ENCODE measurements at regions of chr16 and their contacts with region 1.

Region 1: DNA sequence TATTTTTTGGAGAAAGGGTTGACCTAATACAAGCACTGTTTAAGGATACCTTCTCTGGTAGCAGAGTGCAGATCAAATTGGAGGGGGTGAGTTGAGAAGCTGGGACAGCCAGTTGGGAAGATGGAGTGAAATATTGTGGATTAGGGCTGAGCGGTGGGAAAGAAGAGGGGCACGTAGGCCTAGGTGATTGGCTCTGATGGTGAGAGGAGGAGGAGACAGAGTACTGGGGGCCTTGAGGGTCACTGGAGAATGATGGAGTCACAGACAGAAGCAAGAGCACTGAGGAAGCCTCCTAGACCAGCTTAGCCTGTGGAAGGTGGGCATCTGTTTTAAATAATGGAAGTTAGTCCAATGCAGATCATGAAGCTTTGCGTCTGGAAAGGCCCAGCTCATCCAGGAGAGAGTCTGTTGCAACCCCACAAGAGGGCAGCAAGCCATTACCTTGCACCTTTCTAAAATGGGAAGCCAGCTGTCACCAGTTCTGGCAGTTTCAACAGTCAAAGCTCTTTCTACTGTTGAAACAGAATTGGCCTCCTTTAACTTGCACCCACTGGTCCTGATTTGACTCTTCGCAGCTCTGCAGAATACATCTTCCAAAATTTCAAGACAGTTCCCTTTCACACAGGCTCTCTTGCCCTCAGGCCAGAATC is 11.8 kb downstream of the SLC9A5 start:
- DNase-seq: peak; percentile 72
- ATAC-seq: peak; percentile 80
- H3K4me3 ChIP-seq: no peak overlapping the region
- H3K27ac ChIP-seq: no peak overlapping the region
- H3K4me1 ChIP-seq: peaks cover 2% of the 10 kb centered on the region; the same call in 1 of the 2 replicates
- H3K27me3 ChIP-seq: no peaks in the 10 kb centered on the region
- CTCF ChIP-seq: peak; percentile 79
- POLR2A ChIP-seq: no peak
- RAD21 ChIP-seq: peak; percentile 91

Region 2: DNA sequence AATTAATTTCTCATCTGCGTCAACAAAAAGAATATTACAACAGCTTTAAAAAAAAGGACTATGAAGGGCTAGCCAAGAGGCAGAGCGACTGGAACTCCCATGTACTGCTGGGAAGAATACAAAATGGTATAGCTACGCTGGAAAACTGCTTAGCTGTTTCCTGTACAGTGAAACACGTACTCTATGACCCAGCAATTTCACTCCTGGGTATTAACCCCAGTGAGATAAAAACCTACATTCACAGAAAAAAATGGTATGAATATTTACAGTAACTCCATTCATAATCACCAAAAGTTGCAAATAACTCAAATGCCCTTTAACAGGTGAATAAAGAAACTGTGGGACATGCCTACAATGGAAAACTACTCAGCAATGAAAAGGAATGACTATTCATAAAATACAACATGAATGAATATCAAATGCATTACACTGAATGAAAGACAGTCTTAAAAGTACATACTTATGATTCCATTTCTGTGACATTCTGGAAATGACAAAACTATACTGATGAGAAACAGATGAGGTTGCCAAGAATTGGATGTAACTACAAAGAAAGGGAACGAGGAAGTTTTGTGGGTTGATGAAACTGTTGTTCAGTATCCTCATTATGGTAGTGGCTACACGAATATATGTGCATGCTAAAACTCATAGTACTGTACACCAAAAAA is 591.6 kb before region 1 on chr16:
- CTCF ChIA-PET with region 1: no interaction called
- POLR2A ChIA-PET with region 1: no interaction called
- dilution Hi-C with region 1: no loop called
- in situ Hi-C with region 1: no loop called
- intact Hi-C with region 1: no loop called
- DNase-seq: peak; percentile 66
- ATAC-seq: 0 out of 2 replicates have a peak, but pooled peaks have one; percentile 24
- H3K4me3 ChIP-seq: no peak overlapping the region
- H3K27ac ChIP-seq: no peak overlapping the region
- H3K4me1 ChIP-seq: no peaks in the 10 kb centered on the region
- H3K27me3 ChIP-seq: no peaks in the 10 kb centered on the region
- CTCF ChIP-seq: no peak
- POLR2A ChIP-seq: no peak
- RAD21 ChIP-seq: no peak

Region 3: DNA sequence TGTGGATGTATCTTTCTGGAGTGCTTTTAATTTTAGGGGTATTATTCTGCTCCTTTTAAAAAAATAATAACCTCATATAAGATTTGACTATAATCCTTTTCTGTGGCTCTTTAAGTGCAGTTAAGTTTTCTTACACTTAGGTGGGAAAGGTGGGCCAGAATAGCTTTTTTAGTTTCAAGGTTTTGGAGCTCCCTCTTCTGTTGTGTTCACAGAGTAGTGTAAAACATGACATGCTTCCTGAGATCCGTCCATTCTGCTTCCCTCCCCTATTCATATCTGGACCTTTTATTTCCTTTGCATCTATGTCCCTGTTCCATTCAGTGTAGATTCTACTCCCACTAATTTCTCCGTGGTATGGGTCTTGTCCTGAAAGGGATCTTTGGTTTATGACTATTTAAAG is 78.9 kb after region 1 on chr16:
- CTCF ChIA-PET with region 1: interaction called, 15 read pairs
- POLR2A ChIA-PET with region 1: no interaction called
- dilution Hi-C with region 1: no loop called
- in situ Hi-C with region 1: no loop called
- intact Hi-C with region 1: loop called (anchors 2 kb)
- DNase-seq: peak; percentile 60
- ATAC-seq: peak; percentile 71
- H3K4me3 ChIP-seq: no peak overlapping the region
- H3K27ac ChIP-seq: no peak overlapping the region
- H3K4me1 ChIP-seq: no peaks in the 10 kb centered on the region
- H3K27me3 ChIP-seq: no peaks in the 10 kb centered on the region
- CTCF ChIP-seq: peak; percentile 52
- POLR2A ChIP-seq: no peak
- RAD21 ChIP-seq: peak; percentile 65

Region 4: GRCh38 chr16:67399181-67399733 is 138.7 kb after region 1 on chr16:
- CTCF ChIA-PET with region 1: interaction called, 7 read pairs
- POLR2A ChIA-PET with region 1: no interaction called
- dilution Hi-C with region 1: no loop called
- in situ Hi-C with region 1: no loop called
- intact Hi-C with region 1: loop called (anchors 2 kb)
- DNase-seq: no peak
- ATAC-seq: peak; percentile 73
- H3K4me3 ChIP-seq: no peak overlapping the region
- H3K27ac ChIP-seq: no peak overlapping the region
- H3K4me1 ChIP-seq: peaks cover 11% of the 10 kb centered on the region
- H3K27me3 ChIP-seq: no peaks in the 10 kb centered on the region
- CTCF ChIP-seq: peak; percentile 61
- POLR2A ChIP-seq: no peak
- RAD21 ChIP-seq: peak; percentile 63

Region 5: DNA sequence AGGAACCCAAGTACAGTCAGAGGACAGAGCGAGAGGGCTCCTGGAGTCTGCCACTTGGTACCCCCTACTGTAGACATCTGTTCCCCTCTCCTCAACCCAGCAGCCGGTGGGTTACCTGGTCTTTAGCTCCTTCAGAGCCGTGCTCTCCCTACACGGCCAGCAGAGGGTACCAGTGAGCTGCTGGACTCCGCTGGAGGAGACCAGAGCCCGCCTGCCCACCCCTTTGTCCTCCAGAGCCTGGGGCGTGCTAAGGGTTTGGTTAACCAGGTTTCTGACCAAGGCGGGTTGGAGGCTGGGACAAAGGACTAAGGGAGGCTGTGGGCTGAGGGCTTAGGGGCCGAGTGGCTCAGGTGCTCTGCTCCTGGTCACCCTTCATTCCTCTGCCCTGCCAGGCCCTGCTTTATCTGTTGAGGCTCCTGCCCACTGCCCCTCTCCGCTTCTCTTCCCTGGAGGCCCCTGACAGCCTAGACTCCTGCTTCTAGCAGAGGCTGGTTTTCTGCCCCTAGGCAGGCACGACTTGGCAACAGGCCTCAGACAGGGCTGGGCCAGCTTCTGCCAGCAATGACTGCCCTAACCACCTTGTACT is 167.7 kb after region 1 on chr16:
- CTCF ChIA-PET with region 1: no interaction called
- POLR2A ChIA-PET with region 1: no interaction called
- dilution Hi-C with region 1: no loop called
- in situ Hi-C with region 1: no loop called
- intact Hi-C with region 1: loop called (anchors 5 kb)
- DNase-seq: peak; percentile 47
- ATAC-seq: peak; percentile 73
- H3K4me3 ChIP-seq: no peak overlapping the region
- H3K27ac ChIP-seq: no peak overlapping the region
- H3K4me1 ChIP-seq: peaks cover 5% of the 10 kb centered on the region; the same call in 1 of the 2 replicates
- H3K27me3 ChIP-seq: peaks cover 59% of the 10 kb centered on the region
- CTCF ChIP-seq: peak; percentile 78
- POLR2A ChIP-seq: no peak
- RAD21 ChIP-seq: peak; percentile 71